ENCODE measurements at regions of chrX and their contacts with region 1.

Region 1: DNA sequence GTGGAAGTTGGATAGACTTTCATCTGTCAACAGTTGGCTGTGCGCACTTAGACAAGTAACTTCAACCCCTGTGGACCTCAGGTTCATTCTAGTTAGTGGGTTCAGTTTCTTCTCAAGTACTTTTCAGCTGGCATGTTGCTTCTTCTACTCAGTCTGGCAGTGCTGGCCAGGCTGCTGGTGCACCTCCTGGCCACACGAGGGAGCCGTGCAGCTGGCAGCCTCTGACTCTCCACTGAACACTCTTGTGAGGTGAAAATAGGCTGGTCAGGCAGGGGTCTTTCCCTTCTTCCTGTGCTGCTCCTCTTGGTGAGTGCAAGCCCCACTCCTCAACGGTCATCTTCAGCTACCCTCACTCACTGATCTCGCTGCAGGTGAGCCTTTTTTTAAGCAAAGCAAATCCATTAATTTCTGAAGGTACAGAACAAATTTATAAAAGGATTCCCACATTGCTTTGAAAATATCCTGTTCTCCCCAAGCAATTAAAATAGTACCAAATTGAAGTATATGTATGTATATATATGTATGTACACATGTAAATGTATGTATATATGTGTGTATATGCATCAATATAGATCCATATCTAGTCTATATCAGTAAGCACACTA is 30.6 kb downstream of the LONRF3 start:
- DNase-seq: peak; percentile 68
- ATAC-seq: peak; percentile 61
- H3K4me3 Mint-ChIP-seq: no peak overlapping the region
- H3K27ac Mint-ChIP-seq: no peak overlapping the region
- H3K4me1 Mint-ChIP-seq: no peaks in the 10 kb centered on the region
- H3K27me3 Mint-ChIP-seq: no peaks in the 10 kb centered on the region

Region 2: DNA sequence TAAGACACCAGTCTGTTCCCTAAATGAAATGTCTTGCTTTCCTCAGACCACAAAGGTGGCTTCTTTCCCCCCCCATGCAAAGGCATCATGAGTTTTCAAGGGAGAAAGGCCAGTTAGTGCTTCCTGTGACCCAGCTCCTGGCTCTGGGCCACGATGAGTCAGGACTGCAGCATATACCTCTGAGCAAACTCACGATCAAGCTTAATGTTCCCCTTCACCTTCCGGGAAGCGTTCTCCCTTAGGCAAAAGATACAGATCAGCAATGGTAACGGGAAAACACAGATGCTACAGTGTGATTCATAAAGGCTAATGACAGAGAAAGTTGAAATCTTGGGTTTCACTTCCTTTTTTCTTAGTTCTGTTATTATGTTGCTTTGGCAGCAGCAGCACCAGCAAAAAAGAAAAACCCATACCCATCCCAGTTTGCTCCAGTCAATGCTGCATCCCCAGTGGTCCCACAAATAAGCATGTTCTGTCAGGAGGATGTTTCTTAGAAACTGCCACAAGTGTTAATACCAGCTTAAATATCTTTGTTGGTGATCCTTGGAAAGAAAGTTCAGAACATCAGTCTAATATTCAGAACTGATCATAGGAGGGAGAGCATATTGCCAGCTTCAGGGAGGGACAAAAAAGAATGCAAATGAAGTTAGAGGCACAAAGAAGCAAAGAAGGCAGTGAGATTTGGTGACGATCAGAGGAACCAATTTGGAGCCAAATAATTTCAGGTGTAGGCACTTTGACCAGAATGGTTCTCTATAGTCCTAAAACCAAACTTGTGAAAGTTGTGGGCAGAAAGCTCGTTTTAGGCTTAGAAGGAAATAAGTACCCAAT is 10.6 kb after region 1 on chrX:
- CTCF ChIA-PET with region 1: interaction called, 12 read pairs
- POLR2A ChIA-PET with region 1: no interaction called
- intact Hi-C with region 1: no loop called
- DNase-seq: peak; percentile 75
- ATAC-seq: peak; percentile 98
- H3K4me3 Mint-ChIP-seq: no peak overlapping the region
- H3K27ac Mint-ChIP-seq: peak overlapping the region; percentile 65
- H3K4me1 Mint-ChIP-seq: peaks cover 14% of the 10 kb centered on the region
- H3K27me3 Mint-ChIP-seq: no peaks in the 10 kb centered on the region

Region 3: GRCh38 chrX:119028733-119029330 is 23.8 kb after region 1 on chrX:
- CTCF ChIA-PET with region 1: interaction called, 11 read pairs
- POLR2A ChIA-PET with region 1: no interaction called
- intact Hi-C with region 1: no loop called
- DNase-seq: no peak
- ATAC-seq: no peak
- H3K4me3 Mint-ChIP-seq: no peak overlapping the region
- H3K27ac Mint-ChIP-seq: no peak overlapping the region
- H3K4me1 Mint-ChIP-seq: no peaks in the 10 kb centered on the region
- H3K27me3 Mint-ChIP-seq: no peaks in the 10 kb centered on the region

Region 4: GRCh38 chrX:119181491-119181890 is 176.5 kb after region 1 on chrX:
- CTCF ChIA-PET with region 1: no interaction called
- POLR2A ChIA-PET with region 1: no interaction called
- intact Hi-C with region 1: no loop called
- DNase-seq: peak; percentile 11
- ATAC-seq: no peak
- H3K4me3 Mint-ChIP-seq: no peak overlapping the region
- H3K27ac Mint-ChIP-seq: no peak overlapping the region
- H3K4me1 Mint-ChIP-seq: no peaks in the 10 kb centered on the region
- H3K27me3 Mint-ChIP-seq: no peaks in the 10 kb centered on the region

Measured in activated CD4-positive, alpha-beta T cell treated with anti-CD3 and anti-CD28 coated beads for 36 hours (primary cell).